Natural killer cell (primary cell): ENCODE measurements at regions of chr12 and their contacts with region 1.

Region 1: GRCh38 chr12:106302401-106303201 is at the start of gene TCP11L2:
- DNase-seq: peak; percentile 90 to 95
- ATAC-seq: peak; percentile 70 to 90 (median 72)
- H3K4me3 ChIP-seq: peak within 1 kb of the TSS; percentile 90
- H3K4me3 Mint-ChIP-seq: peak within 1 kb of the TSS; percentile 97
- H3K27ac ChIP-seq: peak within 1 kb of the TSS; percentile 94
- H3K27ac Mint-ChIP-seq: peak within 1 kb of the TSS; percentile 96 to 99
- H3K4me1 ChIP-seq: peaks cover 15% of the 10 kb centered on the region
- H3K4me1 Mint-ChIP-seq: peaks cover 47 to 52% of the 10 kb centered on the region in 2 donors
- H3K27me3 ChIP-seq: no peaks in the 10 kb centered on the region
- H3K27me3 Mint-ChIP-seq: no peaks in the 10 kb centered on the region
- CTCF ChIP-seq: no peak
- total RNA-seq, gene TCP11L2: 68.8 to 97.7 (median 71.1) TPM

Region 2: GRCh38 chr12:106247674-106248311 is 54.8 kb before region 1 on chr12 and contains the start of gene CKAP4:
- intact Hi-C with region 1: loop called (anchors 1 kb)
- DNase-seq: peak; percentile 48 to 82
- ATAC-seq: peak; percentile 67 to 73 (median 73)
- H3K4me3 ChIP-seq: peak within 1 kb of the TSS; percentile 53
- H3K4me3 Mint-ChIP-seq: peak within 1 kb of the TSS; percentile 77
- H3K27ac ChIP-seq: peak within 1 kb of the TSS; percentile 80
- H3K27ac Mint-ChIP-seq: peak within 1 kb of the TSS; percentile 7 to 75
- H3K4me1 ChIP-seq: peaks cover 29% of the 10 kb centered on the region
- H3K4me1 Mint-ChIP-seq: peaks cover 0 to 9% of the 10 kb centered on the region in 2 donors
- H3K27me3 ChIP-seq: no peaks in the 10 kb centered on the region
- H3K27me3 Mint-ChIP-seq: peaks cover 5 to 6% of the 10 kb centered on the region in 2 donors
- CTCF ChIP-seq: no peak
- total RNA-seq, gene CKAP4: 2.0 to 19.4 (median 2.0) TPM

Region 3: DNA sequence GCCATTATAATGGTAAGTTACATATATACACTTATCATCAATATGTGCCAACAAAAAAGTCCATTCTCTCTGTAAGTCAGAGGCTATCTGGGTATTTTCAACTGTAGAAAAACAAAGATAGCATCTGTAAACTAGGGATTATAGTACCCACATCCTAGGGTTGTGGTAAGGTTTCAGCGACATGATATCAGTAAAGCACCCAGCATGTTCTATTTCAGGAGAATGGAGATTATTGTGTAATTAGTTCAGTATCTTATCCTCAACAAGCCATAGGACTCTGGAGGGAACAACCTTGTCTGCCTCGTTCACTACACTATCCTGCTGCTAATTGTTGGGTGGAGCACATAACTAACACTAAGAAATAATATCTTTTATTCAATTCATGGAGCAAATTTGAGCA is 35.1 kb before region 1 on chr12:
- intact Hi-C with region 1: no loop called
- DNase-seq: no peak
- ATAC-seq: peak in 1 of 3 donors; percentile 72
- H3K4me3 ChIP-seq: no peak overlapping the region
- H3K4me3 Mint-ChIP-seq: no peak overlapping the region
- H3K27ac ChIP-seq: no peak overlapping the region
- H3K27ac Mint-ChIP-seq: no peak overlapping the region
- H3K4me1 ChIP-seq: no peaks in the 10 kb centered on the region
- H3K4me1 Mint-ChIP-seq: no peaks in the 10 kb centered on the region
- H3K27me3 ChIP-seq: no peaks in the 10 kb centered on the region
- H3K27me3 Mint-ChIP-seq: peaks cover 19 to 32% of the 10 kb centered on the region in 2 donors
- CTCF ChIP-seq: no peak